ENCODE measurements at regions of chr14 and their contacts with region 1.

Region 1: DNA sequence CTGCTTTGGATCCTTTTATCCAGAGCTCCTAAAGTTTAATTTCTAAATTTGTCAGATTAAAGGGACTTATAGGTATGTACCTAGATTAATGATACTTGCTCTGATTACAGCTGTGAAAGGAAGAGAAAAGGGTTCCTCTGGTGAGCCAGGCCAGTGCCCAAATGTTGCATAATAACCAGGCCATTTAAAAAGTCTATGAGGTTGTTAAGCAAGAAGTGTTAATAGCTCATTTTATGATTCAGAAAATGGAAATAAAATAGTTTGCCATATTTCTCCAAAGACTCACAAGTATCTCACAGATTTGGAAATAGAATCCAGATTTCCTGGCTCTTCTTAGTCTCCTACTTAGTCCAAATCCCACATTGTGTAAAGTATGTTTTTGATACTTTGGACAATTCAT is 67.6 kb downstream of the SLC38A6 start:
- DNase-seq: no peak
- H3K4me3 ChIP-seq: no peak overlapping the region
- H3K27ac ChIP-seq: no peak overlapping the region
- H3K4me1 ChIP-seq: no peaks in the 10 kb centered on the region
- H3K27me3 ChIP-seq: no peaks in the 10 kb centered on the region
- CTCF ChIP-seq: no peak
- POLR2A ChIP-seq: no peak

Region 2: GRCh38 chr14:61196792-61197191 is 148.2 kb after region 1 on chr14:
- intact Hi-C with region 1: loop called in 1 of 2 experiments (anchors 10 kb)
- DNase-seq: no peak
- H3K4me3 ChIP-seq: no peak overlapping the region
- H3K27ac ChIP-seq: no peak overlapping the region
- H3K4me1 ChIP-seq: no peaks in the 10 kb centered on the region
- H3K27me3 ChIP-seq: peaks cover 6% of the 10 kb centered on the region
- CTCF ChIP-seq: no peak
- POLR2A ChIP-seq: no peak